Activated CD4-positive, alpha-beta memory T cell treated with anti-CD3 and anti-CD28 coated beads, Interleukin-2, amount 10 ng/mL, durations not matched to agents 7 days and 5 days (primary cell): ENCODE measurements at regions of chr22 and their contacts with region 1.

Region 1: GRCh38 chr22:35257321-35258190 is at the start of gene HMGXB4:
- DNase-seq: peak; percentile 88
- H3K4me3 Mint-ChIP-seq: peak within 1 kb of the TSS; percentile 94
- H3K27ac Mint-ChIP-seq: peak within 1 kb of the TSS; percentile 85
- H3K4me1 Mint-ChIP-seq: peaks cover 34% of the 10 kb centered on the region
- H3K27me3 Mint-ChIP-seq: no peaks in the 10 kb centered on the region
- total RNA-seq, gene HMGXB4: 32.5 to 36.6 TPM

Region 2: GRCh38 chr22:35231585-35232084 is 25.9 kb before region 1 on chr22:
- CTCF ChIA-PET with region 1: interaction called, 11 read pairs
- POLR2A ChIA-PET with region 1: interaction called, 7 read pairs
- DNase-seq: peak; percentile 75
- H3K4me3 Mint-ChIP-seq: no peak overlapping the region
- H3K27ac Mint-ChIP-seq: no peak overlapping the region
- H3K4me1 Mint-ChIP-seq: peaks cover 4% of the 10 kb centered on the region
- H3K27me3 Mint-ChIP-seq: peaks cover 36% of the 10 kb centered on the region

Region 3: GRCh38 chr22:35275580-35275979 is 18.0 kb after region 1 on chr22:
- CTCF ChIA-PET with region 1: no interaction called
- POLR2A ChIA-PET with region 1: interaction called, 10 read pairs
- DNase-seq: no peak
- H3K4me3 Mint-ChIP-seq: no peak overlapping the region
- H3K27ac Mint-ChIP-seq: no peak overlapping the region
- H3K4me1 Mint-ChIP-seq: peaks cover 28% of the 10 kb centered on the region
- H3K27me3 Mint-ChIP-seq: no peaks in the 10 kb centered on the region

Region 4: DNA sequence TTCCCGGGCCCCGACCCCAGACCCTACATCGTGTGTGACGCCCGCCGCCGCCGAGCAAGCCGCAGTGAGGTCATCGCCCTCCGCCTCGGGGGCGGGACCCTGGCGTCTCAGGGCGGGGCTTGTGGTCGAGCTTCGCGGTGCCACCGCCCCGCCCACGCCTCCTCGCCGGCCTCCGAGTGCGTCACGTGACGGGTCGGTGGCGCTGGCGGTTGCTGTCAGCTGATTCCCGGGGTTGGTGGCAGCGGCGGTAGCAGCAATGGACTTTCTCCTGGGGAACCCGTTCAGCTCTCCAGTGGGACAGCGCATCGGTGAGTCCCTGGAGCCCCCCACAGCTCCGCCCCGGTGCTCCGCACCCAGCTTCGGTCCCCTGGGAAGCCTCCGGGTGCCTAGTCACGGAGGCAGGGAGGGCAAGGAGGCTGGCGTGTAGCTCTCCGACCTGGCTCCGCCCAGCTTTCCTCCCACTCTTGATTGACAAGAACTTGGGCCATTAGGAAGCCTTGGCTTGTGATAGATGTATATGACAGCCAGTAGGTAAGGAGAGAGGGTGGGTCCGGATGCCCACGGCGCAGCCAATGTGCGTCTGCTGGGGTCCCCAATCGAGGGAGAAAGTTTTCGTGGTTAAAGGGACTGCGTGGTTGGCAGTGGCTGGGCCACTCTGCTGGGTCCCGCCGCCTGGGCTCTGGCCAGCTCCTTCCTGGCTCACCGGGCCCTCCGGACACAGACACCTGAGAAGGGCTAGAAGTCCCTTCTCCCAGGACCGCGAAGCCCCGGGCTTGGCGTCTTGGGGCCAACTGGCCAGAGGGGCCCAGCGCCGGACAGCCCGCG is 42.3 kb after region 1 on chr22 and contains the start of gene TOM1:
- CTCF ChIA-PET with region 1: no interaction called
- POLR2A ChIA-PET with region 1: interaction called, 24 read pairs
- DNase-seq: peak; percentile 95
- H3K4me3 Mint-ChIP-seq: peak within 1 kb of the TSS; percentile 92
- H3K27ac Mint-ChIP-seq: peak within 1 kb of the TSS; percentile 93
- H3K4me1 Mint-ChIP-seq: peaks cover 24% of the 10 kb centered on the region
- H3K27me3 Mint-ChIP-seq: no peaks in the 10 kb centered on the region
- total RNA-seq, gene TOM1: 37.3 to 41.4 TPM

Region 5: DNA sequence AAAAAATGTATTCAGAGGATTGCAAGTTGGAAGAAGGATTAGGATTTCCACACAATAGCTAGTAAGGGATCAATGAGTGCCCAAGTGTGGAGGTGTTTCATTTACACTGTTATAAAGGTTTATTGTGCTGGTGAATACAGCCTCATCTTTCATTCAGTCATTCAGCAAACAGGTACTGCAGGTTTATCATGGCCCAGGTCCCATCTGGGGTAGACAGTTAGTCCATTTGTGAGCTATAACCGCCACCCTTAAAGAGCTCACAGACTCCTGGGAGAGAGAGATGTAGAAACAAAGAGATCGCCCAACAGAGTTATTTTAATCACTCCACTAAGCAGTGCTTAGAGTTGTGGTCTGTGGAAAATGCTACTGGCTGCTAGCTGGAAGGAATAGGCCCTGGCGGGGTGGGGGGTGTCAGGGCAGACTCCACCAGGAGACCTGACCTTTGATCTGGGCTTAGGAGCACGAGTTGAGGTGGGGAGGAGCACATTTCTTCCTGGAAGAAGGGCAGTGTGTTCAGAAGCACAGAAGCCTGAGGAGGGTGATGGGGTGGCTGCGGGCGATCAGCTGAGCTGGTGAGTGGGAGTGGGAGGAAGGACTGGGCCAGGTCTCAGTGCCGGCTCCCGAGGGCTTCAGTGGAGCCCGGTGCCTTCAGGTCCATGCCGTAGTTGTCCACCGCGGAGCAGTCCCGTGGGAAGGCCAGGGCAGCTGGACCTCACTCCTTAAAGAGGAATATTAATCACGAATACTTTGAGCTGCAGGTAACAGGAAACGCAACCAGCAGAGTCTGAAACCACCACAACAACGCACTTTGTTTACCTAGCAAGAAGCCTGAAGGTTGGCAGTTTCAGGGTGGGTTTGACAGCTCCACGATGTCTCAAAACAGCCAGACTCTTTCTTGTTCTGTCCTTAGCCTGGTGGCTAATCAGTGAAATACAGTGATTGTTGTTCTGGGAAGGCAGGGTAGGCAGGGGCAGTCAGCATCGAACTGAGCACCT is 53.3 kb after region 1 on chr22:
- CTCF ChIA-PET with region 1: interaction called, 3 read pairs
- POLR2A ChIA-PET with region 1: interaction called, 10 read pairs
- DNase-seq: no peak
- H3K4me3 Mint-ChIP-seq: no peak overlapping the region
- H3K27ac Mint-ChIP-seq: peak overlapping the region; percentile 61
- H3K4me1 Mint-ChIP-seq: peaks cover 95% of the 10 kb centered on the region
- H3K27me3 Mint-ChIP-seq: no peaks in the 10 kb centered on the region

Region 6: GRCh38 chr22:35409783-35410662 is 152.5 kb after region 1 on chr22:
- CTCF ChIA-PET with region 1: no interaction called
- POLR2A ChIA-PET with region 1: no interaction called
- DNase-seq: no peak
- H3K4me3 Mint-ChIP-seq: no peak overlapping the region
- H3K27ac Mint-ChIP-seq: peak overlapping the region; percentile 44
- H3K4me1 Mint-ChIP-seq: peaks cover 27% of the 10 kb centered on the region
- H3K27me3 Mint-ChIP-seq: no peaks in the 10 kb centered on the region